ENCODE measurements at regions of chr1 and their contacts with region 1.

Region 1: DNA sequence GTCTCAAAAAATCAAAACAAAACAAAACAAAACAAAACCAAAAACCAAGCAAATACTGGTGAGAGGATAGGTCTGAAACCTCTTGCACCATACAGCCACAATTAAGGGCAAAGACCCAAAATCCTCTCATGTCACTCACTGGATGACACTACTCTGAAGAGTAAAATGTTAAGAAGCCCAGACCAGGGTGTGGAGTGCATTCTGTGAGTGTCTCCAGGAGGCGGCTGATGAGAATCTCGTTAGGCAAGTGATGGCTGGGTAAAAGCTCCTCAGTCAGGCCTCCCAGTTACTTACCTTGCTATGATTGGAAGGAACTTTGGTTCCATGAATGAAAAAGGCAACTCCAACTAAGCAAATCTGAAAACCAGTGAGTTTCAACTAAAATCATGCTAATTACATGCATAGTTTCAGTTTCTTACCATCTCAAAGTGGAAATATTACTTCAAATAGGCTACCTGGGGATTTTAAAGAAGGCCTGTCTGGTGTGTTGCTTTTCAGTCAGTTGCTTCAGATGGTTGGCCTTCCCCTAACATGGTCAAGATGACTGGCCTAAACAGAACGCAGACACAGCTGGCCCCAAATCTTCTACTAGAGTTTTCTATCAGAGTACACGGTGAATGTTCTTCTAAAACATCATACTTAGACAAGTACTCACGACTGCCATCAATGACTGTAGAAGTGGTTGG is 95.1 kb downstream of the KIAA0319L start:
- DNase-seq: no peak
- ATAC-seq: no peak

Region 2: GRCh38 chr1:35324486-35324885 is 137.6 kb before region 1 on chr1:
- intact Hi-C with region 1: no loop called
- DNase-seq: no peak
- ATAC-seq: no peak

Region 3: DNA sequence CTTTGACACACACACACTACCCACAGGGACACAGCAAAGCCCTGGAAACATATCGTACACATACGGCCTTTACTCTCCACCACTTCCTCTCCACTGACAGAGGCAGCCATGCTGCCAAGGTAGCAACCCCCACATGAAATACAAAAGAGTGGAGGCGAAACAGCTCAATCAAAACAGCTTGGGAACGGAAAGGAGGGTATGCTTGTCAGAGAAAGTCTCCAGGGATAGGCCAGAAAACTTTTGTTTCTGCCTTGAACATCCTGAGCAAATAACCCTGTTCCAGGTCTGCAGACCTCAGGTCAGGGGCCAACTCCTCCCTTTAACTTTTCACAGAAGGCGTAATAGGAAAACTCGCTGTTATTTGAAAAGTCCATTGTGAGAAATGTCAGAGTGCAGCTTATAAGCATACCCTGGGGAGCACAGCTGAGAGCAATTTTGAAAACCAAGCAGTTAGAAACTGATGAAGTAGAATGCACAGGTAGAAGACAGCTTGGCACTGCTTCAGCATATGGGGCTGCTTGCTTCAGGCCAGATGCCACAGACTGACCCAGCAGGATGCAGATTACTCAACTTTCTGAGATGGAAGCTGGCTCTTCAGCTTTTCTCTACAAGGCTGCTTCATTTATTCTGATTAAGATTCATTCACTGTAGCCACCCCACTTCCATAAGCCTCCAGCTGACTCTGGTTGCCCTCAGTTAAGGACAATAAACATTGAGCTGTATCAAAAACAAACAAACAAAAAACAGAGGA is 77.1 kb after region 1 on chr1:
- intact Hi-C with region 1: loop called (anchors 10 kb)
- DNase-seq: no peak
- ATAC-seq: peak; percentile 22

Measured in left ventricle myocardium superior (tissue), 1 donor.